MCF 10A (cell line): ENCODE measurements at regions of chr11 and their contacts with region 1.

Region 1: DNA sequence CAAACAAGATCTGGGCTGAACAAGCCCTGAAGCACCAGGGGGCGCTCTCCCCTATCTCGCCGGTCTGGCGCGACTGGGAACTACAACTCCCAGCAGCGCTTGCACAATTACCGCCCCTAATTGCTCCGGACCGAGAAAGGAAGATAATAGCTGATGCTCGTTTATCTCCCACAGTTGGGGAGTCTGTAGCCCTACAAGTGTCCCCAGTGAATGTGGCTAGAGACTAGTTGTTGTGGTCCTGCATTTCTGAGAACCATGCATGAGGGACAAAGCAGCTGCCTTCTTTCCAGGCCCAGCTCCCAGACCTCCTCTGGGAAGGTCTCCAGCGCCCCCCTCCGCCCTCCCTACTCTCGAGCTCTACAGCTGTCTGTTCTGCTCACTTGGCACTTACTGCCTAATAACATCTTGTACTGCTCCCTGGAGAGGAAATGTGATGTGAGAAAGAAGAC is 34.4 kb downstream of the NRXN2 start:
- DNase-seq: peak; percentile 83
- H3K4me3 Mint-ChIP-seq: no peak overlapping the region
- H3K27ac Mint-ChIP-seq: no peak overlapping the region
- H3K4me1 Mint-ChIP-seq: peaks cover 13% of the 10 kb centered on the region
- H3K27me3 Mint-ChIP-seq: peaks cover 47% of the 10 kb centered on the region
- CTCF ChIP-seq: peak; percentile 86

Region 2: DNA sequence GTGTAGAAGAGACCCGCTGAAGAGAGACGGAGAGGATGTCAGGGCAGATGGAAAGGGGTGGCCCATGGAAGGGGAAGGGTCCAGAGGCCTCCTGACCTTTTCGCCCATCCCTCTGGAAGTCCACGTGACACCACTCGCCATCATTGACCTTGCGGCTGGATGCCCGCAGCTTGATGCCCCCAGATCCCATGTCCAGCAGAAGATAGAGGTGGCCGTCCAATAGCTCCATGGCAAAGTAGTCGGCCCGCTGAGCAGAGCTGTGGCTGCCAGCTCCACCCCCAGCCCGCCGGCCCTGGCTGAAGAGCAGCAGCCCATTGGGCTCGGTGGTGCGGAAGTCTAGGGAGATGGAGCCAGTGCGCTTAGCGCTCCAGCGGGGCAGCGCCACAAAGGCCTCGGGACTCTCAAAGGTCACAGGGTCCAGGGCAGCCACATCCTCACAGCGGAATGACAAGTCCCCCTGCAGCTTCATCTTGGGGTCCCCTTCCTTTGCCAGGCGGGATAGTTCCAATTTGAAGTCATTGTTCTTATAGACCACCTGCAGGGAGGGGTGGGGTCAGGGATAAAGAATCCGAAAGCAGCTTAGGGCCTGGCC is 21.3 kb before region 1 on chr11:
- CTCF ChIA-PET with region 1: interaction called, 20 read pairs
- POLR2A ChIA-PET with region 1: no interaction called
- intact Hi-C with region 1: no loop called
- DNase-seq: no peak
- H3K4me3 Mint-ChIP-seq: no peak overlapping the region
- H3K27ac Mint-ChIP-seq: no peak overlapping the region
- H3K4me1 Mint-ChIP-seq: no peaks in the 10 kb centered on the region
- H3K27me3 Mint-ChIP-seq: peaks cover 44% of the 10 kb centered on the region
- CTCF ChIP-seq: no peak

Region 3: GRCh38 chr11:64675450-64676260 is 12.9 kb before region 1 on chr11:
- CTCF ChIA-PET with region 1: interaction called, 22 read pairs
- POLR2A ChIA-PET with region 1: interaction called, 4 read pairs
- intact Hi-C with region 1: no loop called
- DNase-seq: peak; percentile 61
- H3K4me3 Mint-ChIP-seq: no peak overlapping the region
- H3K27ac Mint-ChIP-seq: no peak overlapping the region
- H3K4me1 Mint-ChIP-seq: peaks cover 6% of the 10 kb centered on the region
- H3K27me3 Mint-ChIP-seq: peaks cover 89% of the 10 kb centered on the region
- CTCF ChIP-seq: no peak

Region 4: DNA sequence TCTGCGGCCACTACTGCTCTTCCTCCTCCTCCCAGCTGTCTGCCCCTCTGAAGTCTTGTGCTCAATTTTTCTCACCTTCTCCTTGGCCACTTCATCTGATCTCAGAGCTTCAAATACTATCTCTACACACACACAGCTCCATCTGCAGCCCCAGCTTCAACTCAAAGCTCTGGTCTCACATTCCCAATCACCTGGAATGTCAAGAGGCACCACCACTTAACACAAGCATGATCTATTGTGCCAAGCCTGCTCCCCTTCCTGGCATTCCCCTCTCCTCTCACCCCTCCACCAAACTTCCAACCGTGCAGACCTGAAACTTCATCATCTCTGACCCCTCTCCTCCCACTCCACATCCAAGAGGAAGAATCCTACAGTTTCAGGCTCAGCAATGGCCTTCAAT is 16.9 kb after region 1 on chr11:
- CTCF ChIA-PET with region 1: interaction called, 44 read pairs
- POLR2A ChIA-PET with region 1: interaction called, 3 read pairs
- intact Hi-C with region 1: no loop called
- DNase-seq: no peak
- H3K4me3 Mint-ChIP-seq: no peak overlapping the region
- H3K27ac Mint-ChIP-seq: no peak overlapping the region
- H3K4me1 Mint-ChIP-seq: no peaks in the 10 kb centered on the region
- H3K27me3 Mint-ChIP-seq: peaks cover 60% of the 10 kb centered on the region
- CTCF ChIP-seq: no peak

Region 5: GRCh38 chr11:64718084-64718779 is 29.7 kb after region 1 on chr11:
- CTCF ChIA-PET with region 1: interaction called, 11 read pairs
- POLR2A ChIA-PET with region 1: interaction called, 4 read pairs
- intact Hi-C with region 1: loop called (anchors 1 kb)
- DNase-seq: no peak
- H3K4me3 Mint-ChIP-seq: no peak overlapping the region
- H3K27ac Mint-ChIP-seq: no peak overlapping the region
- H3K4me1 Mint-ChIP-seq: no peaks in the 10 kb centered on the region
- H3K27me3 Mint-ChIP-seq: peaks cover 93% of the 10 kb centered on the region
- CTCF ChIP-seq: no peak

Region 6: GRCh38 chr11:64723117-64723906 is 34.8 kb after region 1 on chr11 and contains the start of gene NRXN2:
- CTCF ChIA-PET with region 1: interaction called, 11 read pairs
- POLR2A ChIA-PET with region 1: interaction called, 4 read pairs
- intact Hi-C with region 1: loop called (anchors 1 kb)
- DNase-seq: peak; percentile 74
- H3K4me3 Mint-ChIP-seq: peak within 1 kb of the TSS; percentile 62
- H3K27ac Mint-ChIP-seq: no peak within 1 kb of the TSS
- H3K4me1 Mint-ChIP-seq: no peaks in the 10 kb centered on the region
- H3K27me3 Mint-ChIP-seq: peaks cover 62% of the 10 kb centered on the region
- CTCF ChIP-seq: peak; percentile 96
- total RNA-seq, gene NRXN2: not detected in 2 replicates

Region 7: DNA sequence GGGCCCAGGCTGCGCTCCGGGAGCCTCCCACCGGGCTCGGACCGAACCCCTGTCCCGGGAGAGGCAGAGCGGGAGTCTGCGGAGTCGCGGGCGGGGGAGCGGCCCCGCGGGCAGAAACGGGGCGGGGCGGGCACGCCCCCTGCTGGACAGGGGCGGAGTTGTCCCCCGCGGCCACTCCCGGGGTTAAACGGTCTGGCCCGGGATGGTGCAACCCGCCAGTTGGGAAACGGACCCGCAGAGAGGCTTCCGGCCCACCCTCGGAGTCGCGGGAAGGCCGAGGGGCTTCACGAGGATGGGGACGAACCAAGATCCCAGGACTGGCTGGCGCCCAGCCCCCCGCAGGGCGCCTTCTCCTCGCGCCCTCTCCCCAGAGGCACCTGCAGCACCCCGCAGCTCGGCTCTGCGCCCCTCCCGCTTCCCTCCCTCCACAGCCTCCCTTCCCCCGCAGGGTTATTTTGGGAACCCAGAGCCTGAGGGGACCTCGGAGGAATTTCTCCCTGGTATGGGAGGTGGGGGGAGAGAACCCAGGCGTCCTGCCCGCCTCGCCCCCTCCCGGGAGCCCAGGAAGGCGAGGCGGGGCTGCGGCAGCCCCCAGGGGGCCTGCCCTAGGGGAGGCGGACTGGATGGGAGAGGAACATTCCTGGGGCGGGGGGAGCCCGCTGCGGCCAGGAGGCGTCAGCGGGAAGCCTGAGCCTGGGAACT is 54.5 kb after region 1 on chr11:
- CTCF ChIA-PET with region 1: interaction called, 20 read pairs
- POLR2A ChIA-PET with region 1: no interaction called
- intact Hi-C with region 1: no loop called
- DNase-seq: peak; percentile 38
- H3K4me3 Mint-ChIP-seq: peak overlapping the region; percentile 14
- H3K27ac Mint-ChIP-seq: no peak overlapping the region
- H3K4me1 Mint-ChIP-seq: peaks cover 8% of the 10 kb centered on the region
- H3K27me3 Mint-ChIP-seq: peaks cover 55% of the 10 kb centered on the region
- CTCF ChIP-seq: peak; percentile 93

Region 8: DNA sequence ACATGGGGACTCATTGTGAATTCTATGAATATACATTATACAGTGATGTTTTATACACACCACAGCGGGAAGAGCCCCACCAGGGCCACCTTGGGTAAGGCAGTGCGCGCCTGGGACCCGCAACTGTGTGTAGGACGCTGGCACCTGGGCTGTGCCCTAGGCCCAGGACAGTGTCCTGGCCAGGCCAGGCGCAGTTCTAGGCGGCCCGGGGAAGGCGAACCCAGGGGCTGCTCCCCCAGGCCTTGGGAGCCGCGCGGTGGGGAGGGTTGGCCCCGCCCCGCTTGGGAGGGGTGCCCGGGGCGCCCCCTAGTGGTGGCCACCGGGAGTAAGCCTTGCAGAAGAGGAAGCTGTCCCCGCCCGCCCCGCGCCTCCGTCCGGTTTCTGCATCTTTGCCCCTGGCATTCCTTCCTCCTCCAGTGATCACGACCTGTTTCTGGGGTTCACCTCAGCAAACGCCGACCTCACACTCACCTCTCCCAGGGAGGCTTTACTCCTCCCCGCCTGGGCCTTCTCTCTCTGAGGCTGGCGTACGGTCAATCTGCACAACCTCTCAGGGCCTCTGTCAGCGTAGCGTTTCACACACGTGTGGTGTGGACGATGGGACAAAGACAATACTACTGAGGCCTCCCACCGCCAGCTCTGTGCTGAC is 199.3 kb after region 1 on chr11:
- CTCF ChIA-PET with region 1: no interaction called
- POLR2A ChIA-PET with region 1: no interaction called
- intact Hi-C with region 1: no loop called
- DNase-seq: peak; percentile 60
- H3K4me3 Mint-ChIP-seq: no peak overlapping the region
- H3K27ac Mint-ChIP-seq: no peak overlapping the region
- H3K4me1 Mint-ChIP-seq: peaks cover 10% of the 10 kb centered on the region
- H3K27me3 Mint-ChIP-seq: no peaks in the 10 kb centered on the region
- CTCF ChIP-seq: peak; percentile 93

Region 9: DNA sequence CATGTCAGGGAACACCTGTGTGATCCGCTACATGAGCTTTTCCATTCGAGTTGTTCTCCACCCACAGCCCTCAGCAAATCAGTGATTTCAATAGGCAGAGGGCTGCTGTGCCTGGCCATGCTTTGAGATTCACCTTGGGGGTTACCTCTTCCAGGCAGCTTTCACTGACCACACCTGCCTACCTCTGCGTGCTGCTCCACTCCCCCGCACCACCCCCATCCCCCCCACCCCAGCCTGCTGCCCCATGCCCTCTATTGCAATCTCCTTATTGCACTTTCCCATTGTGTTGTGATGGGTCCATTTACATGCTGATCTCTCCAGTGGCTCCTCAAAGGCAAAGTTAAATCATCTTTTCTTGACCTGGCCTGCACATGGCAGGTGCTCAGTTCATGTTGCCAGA is 555.2 kb after region 1 on chr11:
- CTCF ChIA-PET with region 1: no interaction called
- POLR2A ChIA-PET with region 1: no interaction called
- intact Hi-C with region 1: no loop called
- DNase-seq: no peak
- H3K4me3 Mint-ChIP-seq: no peak overlapping the region
- H3K27ac Mint-ChIP-seq: no peak overlapping the region
- H3K4me1 Mint-ChIP-seq: no peaks in the 10 kb centered on the region
- H3K27me3 Mint-ChIP-seq: no peaks in the 10 kb centered on the region
- CTCF ChIP-seq: no peak